ENCODE measurements at regions of chr19 and their contacts with region 1.

Region 1: DNA sequence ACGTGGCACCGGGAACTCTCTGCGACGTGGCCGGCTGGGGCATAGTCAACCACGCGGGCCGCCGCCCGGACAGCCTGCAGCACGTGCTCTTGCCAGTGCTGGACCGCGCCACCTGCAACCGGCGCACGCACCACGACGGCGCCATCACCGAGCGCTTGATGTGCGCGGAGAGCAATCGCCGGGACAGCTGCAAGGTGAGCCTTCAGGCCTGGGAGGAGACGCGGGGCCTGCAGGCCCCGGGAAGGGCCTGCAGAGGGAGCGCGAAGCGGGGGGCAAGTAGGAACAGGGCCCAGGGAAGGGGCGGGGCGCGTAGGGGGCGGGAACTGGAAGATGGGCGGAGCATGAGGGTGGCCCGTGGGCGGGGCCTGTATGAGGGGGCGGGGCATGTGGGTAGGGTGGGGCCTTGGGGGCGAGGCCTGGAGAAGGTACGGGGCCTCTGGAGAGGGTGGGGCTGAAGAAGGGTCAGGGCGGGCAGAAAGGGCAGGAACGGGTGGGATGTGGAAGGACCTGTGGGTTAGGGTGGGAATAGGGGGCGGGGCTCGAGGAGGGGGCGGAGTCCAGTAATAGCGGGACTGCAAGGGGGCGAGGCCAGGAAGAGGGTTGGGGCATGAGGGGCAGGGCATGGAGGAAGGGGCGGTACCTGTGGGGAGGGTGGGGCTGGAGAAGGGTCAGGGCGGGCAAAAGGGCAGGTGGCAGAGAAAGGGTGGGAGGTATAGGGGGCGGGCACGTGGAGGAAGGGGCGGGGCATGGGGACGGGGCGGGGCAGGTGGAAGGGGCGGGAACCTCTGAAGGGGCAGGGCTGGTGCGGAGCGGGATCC is 2.5 kb downstream of the CFD start:
- DNase-seq: peak; percentile 91 to 96
- H3K4me3 ChIP-seq: peak overlapping the region in 2 of 4 experiments; percentile 8 to 59; a peak in 3 of 8 replicates
- H3K27ac ChIP-seq: no peak overlapping the region
- H3K4me1 ChIP-seq: peaks cover 0 to 5% (median 3%) of the 10 kb centered on the region in 4 experiments; a peak in 6 of 7 replicates
- H3K27me3 ChIP-seq: peaks cover 9 to 25% (median 13%) of the 10 kb centered on the region in 4 experiments
- CTCF ChIP-seq: peak; percentile 53 to 73 (median 56)
- EP300 ChIP-seq: no peak
- POLR2A ChIP-seq: no peak
- RAD21 ChIP-seq: peak; percentile 37 to 55; a peak in 3 of 4 replicates

Region 2: DNA sequence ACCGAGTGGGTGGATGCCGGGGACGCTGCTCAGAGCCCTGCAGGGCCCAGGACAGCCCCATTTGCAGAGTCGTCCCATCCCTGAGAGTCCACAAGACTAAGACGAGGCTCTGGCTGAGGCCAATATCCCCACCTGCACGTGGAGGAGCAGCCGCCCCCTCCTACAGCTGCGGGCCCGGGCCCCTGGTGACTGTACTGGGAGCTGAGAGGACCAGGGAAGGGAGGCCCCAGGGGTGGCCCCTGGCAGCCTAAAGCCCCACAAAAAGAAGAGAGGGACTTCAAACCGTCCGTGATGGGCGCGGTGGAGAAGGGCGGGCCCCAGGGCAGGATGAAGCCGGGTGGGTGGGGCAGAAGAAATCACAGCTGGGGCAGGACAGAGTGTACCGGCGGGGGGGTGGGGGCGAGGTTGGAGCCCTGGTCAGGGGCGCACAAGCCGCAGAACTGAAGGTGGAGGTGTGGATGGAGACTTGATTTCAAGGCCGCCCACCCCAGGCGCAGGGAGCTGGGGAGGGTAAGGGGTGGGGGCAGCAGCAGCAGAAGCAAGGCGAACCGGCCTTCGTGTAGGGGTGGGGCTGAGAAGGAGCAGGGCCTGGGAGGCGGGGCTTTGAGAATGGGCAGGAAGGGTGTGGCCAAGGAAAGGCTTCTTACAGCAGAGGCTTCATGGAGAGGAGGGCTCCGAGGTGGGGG is 10.4 kb after region 1 on chr19:
- CTCF ChIA-PET with region 1: interaction called, 16 read pairs
- POLR2A ChIA-PET with region 1: interaction called, 7 read pairs
- DNase-seq: no peak
- H3K4me3 ChIP-seq: peak overlapping the region in 1 of 4 experiments; percentile 35; a peak in 1 of 8 replicates
- H3K27ac ChIP-seq: no peak overlapping the region
- H3K4me1 ChIP-seq: peaks cover 3 to 20% (median 6%) of the 10 kb centered on the region in 4 experiments; a peak in 6 of 7 replicates
- H3K27me3 ChIP-seq: no peaks in the 10 kb centered on the region
- CTCF ChIP-seq: no peak
- EP300 ChIP-seq: no peak
- POLR2A ChIP-seq: no peak
- RAD21 ChIP-seq: no peak

Region 3: GRCh38 chr19:883661-884211 is 21.8 kb after region 1 on chr19:
- CTCF ChIA-PET with region 1: interaction called, 12 read pairs
- POLR2A ChIA-PET with region 1: interaction called, 3 read pairs
- DNase-seq: no peak
- H3K4me3 ChIP-seq: no peak overlapping the region
- H3K27ac ChIP-seq: no peak overlapping the region
- H3K4me1 ChIP-seq: no peaks in the 10 kb centered on the region
- H3K27me3 ChIP-seq: no peaks in the 10 kb centered on the region
- CTCF ChIP-seq: peak; percentile 29 to 44 (median 36); a peak in 3 of 4 replicates
- EP300 ChIP-seq: no peak
- POLR2A ChIP-seq: no peak
- RAD21 ChIP-seq: peak; percentile 28 to 38; a peak in 2 of 4 replicates

Region 4: DNA sequence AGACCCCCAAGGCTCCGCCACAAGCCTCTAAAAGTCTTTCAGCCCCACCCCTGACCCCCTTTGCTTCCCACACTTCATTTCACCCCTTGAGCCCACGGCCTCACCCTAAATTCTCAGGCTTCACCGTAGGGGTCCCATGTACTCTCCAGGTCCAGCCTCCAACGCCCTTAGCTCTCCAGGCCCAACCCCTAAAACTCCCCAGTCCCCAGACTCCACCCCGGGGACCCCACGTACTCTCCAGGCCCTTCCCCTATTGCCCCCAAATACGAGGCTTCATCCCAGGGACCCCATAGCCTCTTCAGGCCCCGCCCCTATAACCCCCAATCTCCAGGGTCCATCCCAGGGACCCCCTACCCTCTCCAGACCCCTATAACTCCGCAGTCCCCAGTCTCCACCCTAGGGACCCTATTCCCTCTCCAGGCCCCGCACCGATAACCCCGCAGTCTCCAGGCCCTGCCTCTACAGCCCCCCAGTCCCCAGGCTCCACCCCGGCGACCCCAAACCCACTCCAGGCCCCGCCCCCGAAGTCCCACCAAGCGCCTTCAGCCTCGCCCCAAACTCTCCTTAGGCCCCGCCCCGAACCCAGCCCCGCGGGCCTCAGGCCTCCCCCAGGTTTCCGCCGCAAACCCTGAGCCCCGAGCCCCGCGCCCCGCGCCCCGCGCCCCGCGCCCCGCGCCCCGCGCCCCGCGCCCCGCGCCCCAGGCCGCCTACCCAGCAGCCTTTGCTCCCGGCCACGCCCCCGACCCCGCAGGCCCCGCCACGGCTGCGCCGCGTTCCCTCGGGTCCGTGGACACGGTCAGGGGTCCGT is 30.5 kb after region 1 on chr19:
- CTCF ChIA-PET with region 1: interaction called, 9 read pairs
- POLR2A ChIA-PET with region 1: interaction called, 22 read pairs
- DNase-seq: no peak
- H3K4me3 ChIP-seq: peak overlapping the region; percentile 75 to 91 (median 78)
- H3K27ac ChIP-seq: peak overlapping the region; percentile 89
- H3K4me1 ChIP-seq: peaks cover 0 to 5% (median under 1%) of the 10 kb centered on the region in 4 experiments; a peak in 3 of 7 replicates
- H3K27me3 ChIP-seq: no peaks in the 10 kb centered on the region
- CTCF ChIP-seq: no peak
- EP300 ChIP-seq: no peak
- POLR2A ChIP-seq: no peak
- RAD21 ChIP-seq: no peak

Region 5: GRCh38 chr19:917323-918151 is 55.6 kb after region 1 on chr19 and contains the start of gene KISS1R:
- CTCF ChIA-PET with region 1: interaction called, 22 read pairs
- POLR2A ChIA-PET with region 1: interaction called, 10 read pairs
- DNase-seq: peak in 1 of 2 experiments; percentile 91
- H3K4me3 ChIP-seq: peak within 1 kb of the TSS; percentile 34 to 76 (median 54)
- H3K27ac ChIP-seq: no peak within 1 kb of the TSS
- H3K4me1 ChIP-seq: peaks cover 0 to 22% (median 11%) of the 10 kb centered on the region in 4 experiments; a peak in 5 of 7 replicates
- H3K27me3 ChIP-seq: peaks cover 32 to 44% (median 38%) of the 10 kb centered on the region in 4 experiments
- CTCF ChIP-seq: peak; percentile 62 to 95 (median 79)
- EP300 ChIP-seq: 0 out of 3 replicates have a peak, but pooled peaks of 1 of the 2 experiments have one; percentile 28
- POLR2A ChIP-seq: no peak
- RAD21 ChIP-seq: peak; percentile 74 to 86
- total RNA-seq, gene KISS1R: 2.3 and 2.6 TPM in 2 replicates

Region 6: GRCh38 chr19:925526-926322 is 63.8 kb after region 1 on chr19 and contains the start of gene ARID3A:
- CTCF ChIA-PET with region 1: interaction called, 22 read pairs
- POLR2A ChIA-PET with region 1: no interaction called
- DNase-seq: peak in 1 of 2 experiments; percentile 75
- H3K4me3 ChIP-seq: peak within 1 kb of the TSS; percentile 65 to 97 (median 76)
- H3K27ac ChIP-seq: peak within 1 kb of the TSS; percentile 39; the same call in 1 of the 2 replicates
- H3K4me1 ChIP-seq: peaks cover 2 to 8% (median 6%) of the 10 kb centered on the region in 4 experiments
- H3K27me3 ChIP-seq: peaks cover 6 to 8% (median 8%) of the 10 kb centered on the region in 4 experiments
- CTCF ChIP-seq: no peak
- EP300 ChIP-seq: no peak
- POLR2A ChIP-seq: no peak
- RAD21 ChIP-seq: no peak
- total RNA-seq, gene ARID3A: 77.4 and 78.4 TPM in 2 replicates

Region 7: DNA sequence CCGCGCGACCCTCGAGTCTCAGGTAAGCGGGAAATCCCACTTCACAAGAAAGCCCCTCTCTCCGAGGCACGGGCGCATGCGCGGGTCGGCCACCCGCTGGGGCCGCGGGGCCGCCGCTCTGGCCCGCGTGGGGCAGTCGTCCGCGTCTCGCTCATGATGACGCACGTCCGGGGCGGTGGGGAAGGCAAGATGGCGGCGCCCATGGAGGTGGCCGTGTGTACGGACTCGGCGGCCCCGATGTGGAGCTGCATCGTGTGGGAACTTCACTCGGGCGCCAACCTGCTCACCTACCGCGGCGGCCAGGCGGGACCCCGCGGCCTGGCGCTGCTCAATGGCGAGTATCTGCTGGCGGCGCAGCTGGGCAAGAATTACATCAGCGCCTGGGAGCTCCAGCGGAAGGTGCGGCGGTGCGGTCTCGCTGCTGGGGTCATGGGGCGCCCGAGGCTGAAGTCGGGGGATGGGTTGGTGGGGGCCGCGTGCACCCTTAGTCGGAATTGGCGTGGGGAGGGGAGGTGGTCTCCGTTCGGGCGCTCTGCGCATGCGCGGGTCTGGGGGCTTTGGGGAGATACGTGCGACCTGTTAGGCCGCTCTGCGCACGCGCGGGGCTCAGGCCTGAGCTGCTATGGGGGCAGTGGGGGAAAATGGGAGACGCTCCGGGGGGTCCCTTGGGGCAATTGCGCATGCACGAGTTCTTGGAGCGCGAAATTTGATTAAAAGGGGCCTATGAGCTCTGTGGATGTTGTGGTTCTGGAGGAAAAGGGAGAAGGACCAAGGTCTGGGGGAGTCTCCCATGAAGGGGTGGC is 122.4 kb after region 1 on chr19 and contains the start of gene WDR18:
- CTCF ChIA-PET with region 1: interaction called, 18 read pairs
- POLR2A ChIA-PET with region 1: interaction called, 5 read pairs
- DNase-seq: peak; percentile 76 to 95
- H3K4me3 ChIP-seq: peak within 1 kb of the TSS; percentile 87 to 99 (median 92)
- H3K27ac ChIP-seq: peak within 1 kb of the TSS; percentile 96
- H3K4me1 ChIP-seq: peaks cover 0 to 14% (median 9%) of the 10 kb centered on the region in 4 experiments; a peak in 5 of 7 replicates
- H3K27me3 ChIP-seq: no peaks in the 10 kb centered on the region
- CTCF ChIP-seq: no peak
- EP300 ChIP-seq: no peak
- POLR2A ChIP-seq: peak; percentile 66 to 76
- RAD21 ChIP-seq: no peak
- total RNA-seq, gene WDR18: 87.7 and 90.1 TPM in 2 replicates

Region 8: DNA sequence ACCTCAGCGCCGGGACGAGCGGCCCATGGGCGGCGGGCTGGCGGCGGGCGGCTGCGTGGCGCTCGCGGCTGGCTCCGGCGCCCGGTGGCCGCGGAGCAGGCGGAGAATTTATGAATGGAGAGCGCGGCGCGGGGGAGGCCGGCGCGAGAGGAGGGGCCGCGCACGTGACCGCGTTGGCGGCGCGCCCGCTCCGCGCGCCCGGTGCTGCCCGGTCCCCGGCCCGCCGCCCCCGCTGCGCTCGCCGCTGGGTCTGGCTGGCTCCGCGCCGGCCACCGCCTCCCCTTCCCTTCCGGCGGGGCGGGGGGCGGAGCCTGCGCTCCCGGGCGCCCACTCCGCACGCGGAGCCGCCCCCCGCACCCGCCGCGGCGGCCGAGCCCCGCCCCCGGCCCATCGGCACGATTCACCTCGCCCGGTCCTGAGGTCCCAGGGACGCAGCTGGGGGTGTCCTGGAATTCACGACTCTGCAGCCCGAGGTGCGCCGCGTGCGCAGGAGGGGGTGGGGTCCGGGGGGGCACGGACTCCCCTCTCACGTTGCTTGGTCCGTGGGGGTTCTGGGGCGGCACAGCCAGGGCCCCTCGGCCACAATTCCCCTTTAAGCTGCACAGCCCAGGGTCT is 375.9 kb after region 1 on chr19 and contains the start of gene CBARP:
- CTCF ChIA-PET with region 1: no interaction called
- POLR2A ChIA-PET with region 1: no interaction called
- DNase-seq: peak in 1 of 2 experiments; percentile 61
- H3K4me3 ChIP-seq: peak within 1 kb of the TSS; percentile 67 to 75 (median 70)
- H3K27ac ChIP-seq: no peak within 1 kb of the TSS
- H3K4me1 ChIP-seq: peaks cover 0 to 17% (median 11%) of the 10 kb centered on the region in 4 experiments; a peak in 5 of 7 replicates
- H3K27me3 ChIP-seq: no peaks in the 10 kb centered on the region
- CTCF ChIP-seq: no peak
- EP300 ChIP-seq: no peak
- POLR2A ChIP-seq: no peak
- RAD21 ChIP-seq: no peak
- total RNA-seq, gene CBARP: 14.7 and 18.0 TPM in 2 replicates

Measured in H1 (cell line).